Stomach (tissue), 19 donors: ENCODE measurements at regions of chr1 and their contacts with region 1.

Region 1: DNA sequence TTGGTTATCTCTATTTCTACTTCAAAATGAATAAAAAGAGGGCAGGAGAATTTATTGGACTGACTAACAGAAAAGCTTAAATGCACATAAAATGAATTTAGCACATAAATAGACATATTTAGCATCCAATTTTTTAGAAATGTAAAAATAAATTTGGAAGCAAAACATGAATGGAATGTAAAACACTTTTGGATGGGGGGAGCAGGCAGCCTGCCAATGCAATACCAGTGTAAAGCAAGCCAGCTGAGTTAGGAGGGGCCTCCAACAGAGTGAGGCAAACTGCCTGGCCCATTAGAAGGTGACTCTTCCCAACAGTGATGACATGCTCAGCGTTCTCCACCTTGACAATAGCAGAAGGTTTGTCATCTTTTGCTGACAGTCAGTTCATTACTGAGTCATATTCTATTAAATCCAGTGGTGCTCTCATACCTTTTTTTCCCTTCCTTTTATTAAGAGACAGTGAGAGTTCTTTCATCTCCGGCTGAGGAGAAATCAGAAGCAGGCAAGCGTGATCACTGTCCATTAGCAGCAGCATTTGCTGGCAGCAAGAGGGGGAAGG is 19.5 kb upstream of the EXO1 start:
- DNase-seq: peak in 1 of 2 donors; percentile 7
- H3K4me3 ChIP-seq: no peak overlapping the region
- H3K27ac ChIP-seq: no peak overlapping the region
- H3K4me1 ChIP-seq: peaks cover 0 to 5% (median 0%) of the 10 kb centered on the region in 4 donors
- H3K27me3 ChIP-seq: no peaks in the 10 kb centered on the region
- CTCF ChIP-seq: no peak
- EP300 ChIP-seq: no peak
- POLR2A ChIP-seq: no peak

Region 2: DNA sequence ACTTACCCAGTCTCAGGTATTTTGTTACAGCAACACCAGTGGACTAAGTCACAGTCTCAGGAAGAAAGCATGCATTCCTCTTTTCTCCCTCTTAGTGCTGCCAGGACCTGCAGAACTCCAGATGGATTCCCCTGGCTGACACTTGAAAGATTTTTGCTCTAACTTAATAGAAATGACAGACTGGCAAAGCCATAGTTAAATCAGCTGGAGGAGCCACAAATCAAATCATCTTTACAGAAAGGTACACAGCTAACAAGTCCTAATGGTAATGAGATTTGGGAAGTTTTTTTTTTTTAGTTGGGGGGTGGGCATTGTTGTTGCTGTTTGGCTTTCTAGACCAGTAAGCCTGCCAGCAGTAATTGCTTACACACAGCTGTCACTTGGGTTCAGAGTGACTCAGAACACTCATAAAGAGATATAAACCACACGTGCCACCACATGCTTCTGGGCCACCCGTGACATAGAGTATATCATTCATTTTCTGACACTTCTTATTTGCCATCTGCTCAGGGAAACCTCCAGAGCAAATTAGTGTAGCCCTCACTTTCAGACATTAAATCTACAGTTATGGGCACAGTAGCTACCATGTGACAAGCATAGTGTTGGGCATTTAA is 381.4 kb before region 1 on chr1:
- intact Hi-C with region 1: no loop called
- DNase-seq: no peak
- H3K4me3 ChIP-seq: no peak overlapping the region
- H3K27ac ChIP-seq: no peak overlapping the region
- H3K4me1 ChIP-seq: no peaks in the 10 kb centered on the region
- H3K27me3 ChIP-seq: no peaks in the 10 kb centered on the region
- CTCF ChIP-seq: no peak
- EP300 ChIP-seq: no peak
- POLR2A ChIP-seq: no peak

Region 3: GRCh38 chr1:241531195-241532161 is 297.1 kb before region 1 on chr1:
- intact Hi-C with region 1: loop called (anchors 10 kb)
- DNase-seq: peak in 1 of 2 donors; percentile 80
- H3K4me3 ChIP-seq: peak overlapping the region; percentile 30 to 47 (median 44)
- H3K27ac ChIP-seq: peak overlapping the region in 4 of 5 donors; percentile 21 to 48 (median 44)
- H3K4me1 ChIP-seq: peaks cover 0 to 6% (median 0%) of the 10 kb centered on the region in 4 donors
- H3K27me3 ChIP-seq: no peaks in the 10 kb centered on the region
- CTCF ChIP-seq: peak in 5 of 7 experiments; percentile 17 to 70 (median 58)
- EP300 ChIP-seq: no peak
- POLR2A ChIP-seq: no peak

Region 4: DNA sequence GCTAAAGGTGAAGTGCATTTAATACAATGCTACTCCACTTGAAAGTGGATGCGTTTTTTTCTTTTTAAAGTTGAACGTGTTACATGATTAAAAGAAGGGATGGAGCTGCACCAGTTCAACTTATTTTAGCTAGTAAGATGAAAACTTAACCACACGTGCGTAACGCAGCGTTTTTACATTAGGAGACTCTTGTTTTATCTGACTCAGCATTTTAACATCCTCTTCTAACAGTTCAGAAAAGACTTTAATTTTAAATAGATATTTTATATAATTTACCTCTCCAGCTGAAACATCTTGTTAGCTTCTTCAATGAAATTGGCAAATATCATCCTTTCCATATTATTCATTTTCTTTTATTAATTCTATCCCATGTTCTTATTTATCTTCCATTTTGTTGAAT is 52.9 kb after region 1 on chr1:
- intact Hi-C with region 1: no loop called
- DNase-seq: no peak
- H3K4me3 ChIP-seq: no peak overlapping the region
- H3K27ac ChIP-seq: no peak overlapping the region
- H3K4me1 ChIP-seq: no peaks in the 10 kb centered on the region
- H3K27me3 ChIP-seq: no peaks in the 10 kb centered on the region
- CTCF ChIP-seq: no peak
- EP300 ChIP-seq: no peak
- POLR2A ChIP-seq: no peak

Region 5: DNA sequence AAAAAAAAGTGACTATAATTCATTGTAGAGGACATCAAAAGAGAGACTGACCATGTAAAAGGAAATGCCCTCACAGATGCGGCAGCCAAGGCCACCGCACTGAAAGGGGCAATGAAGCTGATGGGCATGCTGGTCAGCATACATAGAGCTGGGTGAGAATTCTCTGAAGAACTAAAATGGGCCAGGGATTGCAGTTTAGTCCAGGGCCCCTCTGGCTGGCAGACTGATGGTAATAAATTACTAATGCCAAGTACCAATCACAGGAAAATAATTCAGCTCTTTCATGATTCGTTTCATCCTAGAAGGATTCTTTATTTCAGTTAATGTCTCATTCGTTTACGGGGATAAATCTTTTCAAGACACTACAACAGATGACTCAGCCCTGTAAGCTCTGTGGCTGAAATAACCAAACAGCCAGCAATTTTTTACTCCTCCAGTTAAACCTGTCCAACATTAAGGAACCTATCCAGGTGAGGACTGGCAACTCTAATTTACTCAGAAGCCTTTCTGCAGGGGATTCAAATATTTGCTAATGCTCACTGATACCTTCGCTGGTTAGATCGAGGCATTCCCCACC is 227.3 kb after region 1 on chr1:
- intact Hi-C with region 1: no loop called
- DNase-seq: no peak
- H3K4me3 ChIP-seq: no peak overlapping the region
- H3K27ac ChIP-seq: no peak overlapping the region
- H3K4me1 ChIP-seq: no peaks in the 10 kb centered on the region
- H3K27me3 ChIP-seq: no peaks in the 10 kb centered on the region
- CTCF ChIP-seq: no peak
- EP300 ChIP-seq: no peak
- POLR2A ChIP-seq: no peak

Region 6: DNA sequence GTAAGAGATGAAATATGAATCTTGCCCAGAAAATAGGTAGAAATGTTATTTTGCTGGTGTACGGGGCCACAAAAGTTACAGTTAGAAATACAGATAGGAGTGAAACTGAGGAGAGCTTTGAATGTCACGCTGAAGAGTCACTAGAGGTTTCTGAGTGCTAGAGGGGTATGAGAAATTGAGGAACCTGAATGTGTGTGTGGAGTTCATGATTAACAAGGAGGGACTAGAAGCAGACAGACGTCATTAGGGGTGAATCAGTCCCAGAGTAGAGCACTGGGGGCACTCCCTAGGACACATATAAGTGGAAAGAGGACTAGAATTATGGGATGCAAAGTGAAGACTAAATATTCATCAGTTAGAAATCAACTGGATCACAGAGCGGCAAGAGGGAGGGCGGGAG is 359.3 kb after region 1 on chr1:
- intact Hi-C with region 1: no loop called
- DNase-seq: no peak
- H3K4me3 ChIP-seq: no peak overlapping the region
- H3K27ac ChIP-seq: no peak overlapping the region
- H3K4me1 ChIP-seq: no peaks in the 10 kb centered on the region
- H3K27me3 ChIP-seq: no peaks in the 10 kb centered on the region
- CTCF ChIP-seq: no peak
- EP300 ChIP-seq: no peak
- POLR2A ChIP-seq: no peak